Gastrocnemius medialis (tissue), 4 donors: ENCODE measurements at regions of chr2 and their contacts with region 1.

Region 1: GRCh38 chr2:172931918-172932520 is 143.6 kb upstream of the MAP3K20 start:
- DNase-seq: peak; percentile 10 to 28
- ATAC-seq: no peak
- H3K4me3 ChIP-seq: peak overlapping the region; percentile 11 to 42 (median 25)
- H3K27ac ChIP-seq: peak overlapping the region in 3 of 4 donors; percentile 51 to 67 (median 60)
- H3K4me1 ChIP-seq: peaks cover 10 to 20% of the 10 kb centered on the region in 2 donors
- H3K27me3 ChIP-seq: no peaks in the 10 kb centered on the region
- CTCF ChIP-seq: peak; percentile 40 to 81 (median 48)
- POLR2A ChIP-seq: no peak

Region 2: DNA sequence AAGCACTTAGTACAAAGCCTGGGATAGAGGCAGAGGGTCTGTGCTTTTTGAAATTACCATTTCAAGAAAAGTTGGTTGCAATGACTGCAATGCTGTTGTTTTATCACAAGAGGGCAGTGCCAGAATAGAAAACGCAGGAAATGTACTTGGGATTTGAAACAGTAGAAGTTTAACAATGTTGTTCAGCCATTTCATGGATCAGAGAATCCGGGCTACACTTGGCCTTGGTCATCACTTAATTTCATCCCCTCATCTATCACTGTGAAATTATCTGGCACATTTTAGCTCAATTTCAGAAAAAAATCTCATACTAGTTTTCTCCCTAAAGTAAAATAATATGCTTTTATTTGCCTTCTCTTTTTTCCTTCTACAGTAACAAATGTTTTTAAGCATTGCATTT is 125.5 kb before region 1 on chr2:
- in situ Hi-C with region 1: loop called (anchors 5 to 25 kb)
- intact Hi-C with region 1: loop called (anchors 2 kb)
- DNase-seq: no peak
- ATAC-seq: peak; percentile 45 to 56
- H3K4me3 ChIP-seq: no peak overlapping the region
- H3K27ac ChIP-seq: no peak overlapping the region
- H3K4me1 ChIP-seq: no peaks in the 10 kb centered on the region
- H3K27me3 ChIP-seq: no peaks in the 10 kb centered on the region
- CTCF ChIP-seq: peak; percentile 47 to 80 (median 62)
- POLR2A ChIP-seq: no peak

Region 3: GRCh38 chr2:172813314-172813888 is 118.6 kb before region 1 on chr2:
- in situ Hi-C with region 1: loop called (anchors 5 to 25 kb)
- intact Hi-C with region 1: no loop called
- DNase-seq: no peak
- ATAC-seq: no peak
- H3K4me3 ChIP-seq: no peak overlapping the region
- H3K27ac ChIP-seq: no peak overlapping the region
- H3K4me1 ChIP-seq: no peaks in the 10 kb centered on the region
- H3K27me3 ChIP-seq: no peaks in the 10 kb centered on the region
- CTCF ChIP-seq: peak in 4 of 5 experiments; percentile 18 to 45 (median 26)
- POLR2A ChIP-seq: no peak

Region 4: DNA sequence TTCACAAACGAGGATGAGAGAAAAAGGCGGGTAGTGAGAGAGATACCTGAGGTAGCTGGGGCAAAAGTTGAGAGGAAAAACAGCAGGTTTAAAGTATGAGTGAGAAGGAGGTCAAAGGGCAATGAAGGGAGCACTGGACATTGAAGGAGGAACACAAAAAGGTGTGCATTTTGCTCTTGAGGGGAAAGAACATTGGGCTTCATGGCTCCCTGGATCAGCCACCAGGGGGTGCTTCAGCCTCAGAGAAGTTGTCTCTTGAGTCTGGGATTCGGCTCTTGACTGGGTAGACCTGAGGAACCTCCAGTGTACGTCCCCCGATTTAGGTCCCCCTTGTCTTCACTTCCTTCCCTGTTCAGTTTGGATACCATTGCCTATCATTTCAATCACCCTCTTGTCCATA is 67.8 kb before region 1 on chr2:
- in situ Hi-C with region 1: loop called in 2 of 4 experiments (anchors 5 to 10 kb)
- intact Hi-C with region 1: loop called (anchors 1 kb)
- DNase-seq: peak in 1 of 2 donors; percentile 33
- ATAC-seq: peak in 1 of 2 donors; percentile 75
- H3K4me3 ChIP-seq: no peak overlapping the region
- H3K27ac ChIP-seq: no peak overlapping the region
- H3K4me1 ChIP-seq: peaks cover 5 to 15% of the 10 kb centered on the region in 2 donors
- H3K27me3 ChIP-seq: no peaks in the 10 kb centered on the region
- CTCF ChIP-seq: peak; percentile 37 to 67 (median 64)
- POLR2A ChIP-seq: no peak